Psoas muscle (tissue), 8 donors: ENCODE measurements at regions of chr1 and their contacts with region 1.

Region 1: GRCh38 chr1:169610108-169610507 is 19.8 kb downstream of the SELP start:
- DNase-seq: no peak
- ATAC-seq: peak in 2 of 4 donors; percentile 58
- H3K4me3 ChIP-seq: no peak overlapping the region
- H3K27ac ChIP-seq: no peak overlapping the region
- H3K4me1 ChIP-seq: no peaks in the 10 kb centered on the region
- H3K27me3 ChIP-seq: peaks cover 0 to 2% (median 0%) of the 10 kb centered on the region in 3 donors
- CTCF ChIP-seq: no peak

Region 2: DNA sequence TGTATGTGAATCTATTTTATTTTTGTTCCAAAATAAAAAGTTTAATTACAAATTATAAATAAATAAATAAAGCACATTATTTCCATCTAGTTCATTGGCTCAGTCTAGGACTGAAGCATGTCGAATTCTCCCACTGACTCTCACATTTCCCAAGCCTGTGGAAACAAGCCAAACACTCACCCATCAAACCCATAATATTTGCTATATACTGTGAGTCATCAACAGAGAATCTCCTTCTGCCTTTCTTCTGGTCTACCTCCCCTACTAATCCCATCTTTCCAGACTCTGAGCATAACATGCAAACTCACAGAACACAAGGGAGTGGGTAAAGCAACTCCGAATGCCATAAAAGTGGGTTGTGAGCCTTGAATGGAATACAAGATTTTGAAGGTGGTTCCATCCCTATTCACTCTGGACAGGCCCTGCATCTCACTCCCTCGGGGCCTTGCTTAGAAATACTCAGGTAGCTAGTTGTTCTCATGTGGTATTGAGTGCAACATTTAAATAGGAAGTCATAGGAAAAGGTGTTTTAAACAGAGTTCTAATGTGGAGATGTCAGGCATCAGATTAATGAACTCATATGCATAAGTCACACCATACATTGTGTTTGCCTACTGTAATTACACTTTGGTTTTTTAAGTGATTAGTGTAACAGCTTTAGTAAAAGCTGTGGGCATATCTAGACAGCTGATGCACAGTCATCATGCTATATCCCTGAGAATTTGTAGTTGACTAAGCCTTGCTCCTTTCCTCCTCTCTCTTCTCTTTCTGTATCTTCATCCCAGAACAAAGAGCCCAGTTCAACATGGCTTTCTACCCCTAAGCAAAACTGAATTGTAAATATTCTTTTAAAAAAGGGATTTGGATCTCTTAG is 70.9 kb before region 1 on chr1:
- intact Hi-C with region 1: no loop called
- DNase-seq: no peak
- ATAC-seq: no peak
- H3K4me3 ChIP-seq: no peak overlapping the region
- H3K27ac ChIP-seq: no peak overlapping the region
- H3K4me1 ChIP-seq: no peaks in the 10 kb centered on the region
- H3K27me3 ChIP-seq: no peaks in the 10 kb centered on the region
- CTCF ChIP-seq: no peak

Region 3: GRCh38 chr1:169694304-169695075 is 84.4 kb after region 1 on chr1:
- intact Hi-C with region 1: loop called in 1 of 2 experiments (anchors 10 kb)
- DNase-seq: no peak
- ATAC-seq: no peak
- H3K4me3 ChIP-seq: no peak overlapping the region
- H3K27ac ChIP-seq: no peak overlapping the region
- H3K4me1 ChIP-seq: no peaks in the 10 kb centered on the region
- H3K27me3 ChIP-seq: peaks cover 0 to 3% (median 0%) of the 10 kb centered on the region in 3 donors
- CTCF ChIP-seq: no peak